Uterus (tissue), 4 donors: ENCODE measurements at regions of chr2 and their contacts with region 1.

Region 1: GRCh38 chr2:231104115-231104713 is 20.6 kb downstream of the HTR2B start:
- DNase-seq: peak; percentile 74 to 79
- H3K4me3 ChIP-seq: no peak overlapping the region
- H3K27ac ChIP-seq: peak overlapping the region; percentile 75 to 89
- H3K4me1 ChIP-seq: peaks cover 0 to 6% of the 10 kb centered on the region in 2 donors
- H3K27me3 ChIP-seq: no peaks in the 10 kb centered on the region
- CTCF ChIP-seq: peak; percentile 90 to 95 (median 94)
- POLR2A ChIP-seq: no peak

Region 2: GRCh38 chr2:231191896-231192872 is 88.0 kb after region 1 on chr2:
- intact Hi-C with region 1: loop called (anchors 2 kb)
- DNase-seq: peak; percentile 94 to 96
- H3K4me3 ChIP-seq: no peak overlapping the region
- H3K27ac ChIP-seq: peak overlapping the region; percentile 98
- H3K4me1 ChIP-seq: peaks cover 0 to 4% of the 10 kb centered on the region in 2 donors
- H3K27me3 ChIP-seq: no peaks in the 10 kb centered on the region
- CTCF ChIP-seq: peak; percentile 77 to 92 (median 82)
- POLR2A ChIP-seq: peak in 1 of 2 donors; percentile 22

Region 3: GRCh38 chr2:231250161-231250560 is 145.9 kb after region 1 on chr2:
- intact Hi-C with region 1: no loop called
- DNase-seq: no peak
- H3K4me3 ChIP-seq: no peak overlapping the region
- H3K27ac ChIP-seq: no peak overlapping the region
- H3K4me1 ChIP-seq: no peaks in the 10 kb centered on the region
- H3K27me3 ChIP-seq: no peaks in the 10 kb centered on the region
- CTCF ChIP-seq: no peak
- POLR2A ChIP-seq: no peak

Region 4: DNA sequence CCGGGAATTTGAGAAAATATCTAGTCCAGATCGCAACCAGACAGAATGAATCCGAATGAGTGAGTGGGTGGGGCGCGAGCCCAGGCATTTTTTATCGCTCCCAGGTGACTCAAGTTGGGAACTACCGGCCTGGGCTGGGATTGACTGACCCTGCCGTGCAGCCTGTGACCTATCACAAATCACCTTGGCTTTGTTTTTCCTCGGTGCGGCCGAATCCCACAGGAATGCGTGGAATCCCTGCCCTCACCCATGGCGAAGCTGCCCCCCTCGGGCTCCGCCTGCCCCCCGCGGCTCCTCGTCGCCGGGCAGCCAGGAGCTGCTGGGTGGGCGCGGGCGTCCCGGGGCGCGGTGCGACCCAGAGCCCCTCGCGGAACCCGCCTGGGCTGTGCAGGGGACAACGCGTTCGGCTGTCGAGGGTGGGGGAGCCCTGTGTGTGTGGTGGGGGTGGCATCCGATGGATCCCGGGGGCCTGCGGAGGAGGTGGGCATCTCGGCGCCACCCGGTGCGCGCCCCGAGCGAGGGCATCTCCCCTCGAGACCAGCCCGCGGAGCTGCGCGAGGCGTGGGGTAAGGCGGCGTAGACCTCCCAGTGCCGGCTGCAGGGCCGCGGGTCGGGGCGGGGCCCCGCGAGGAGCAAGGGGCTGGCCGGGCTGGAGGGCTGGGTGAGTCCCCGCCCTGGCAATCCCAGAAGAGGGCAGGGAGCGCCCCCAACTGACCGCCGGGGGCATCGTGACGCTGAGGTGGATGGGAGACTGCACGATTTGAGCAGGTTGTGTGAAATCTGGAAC is 307.8 kb after region 1 on chr2:
- intact Hi-C with region 1: loop called (anchors 10 kb)
- DNase-seq: peak; percentile 87 to 91
- H3K4me3 ChIP-seq: peak overlapping the region; percentile 21 to 60
- H3K27ac ChIP-seq: peak overlapping the region; percentile 20 to 77
- H3K4me1 ChIP-seq: no peaks in the 10 kb centered on the region
- H3K27me3 ChIP-seq: no peaks in the 10 kb centered on the region
- CTCF ChIP-seq: peak; percentile 80 to 93 (median 90)
- POLR2A ChIP-seq: peak in 1 of 2 donors; percentile 38